BJ (cell line): ENCODE measurements at regions of chr7 and their contacts with region 1.

Region 1: GRCh38 chr7:55992346-55992745 is 28.0 kb downstream of the NIPSNAP2 start:
- DNase-seq: no peak
- H3K4me3 ChIP-seq: no peak overlapping the region
- H3K27me3 ChIP-seq: no peaks in the 10 kb centered on the region
- CTCF ChIP-seq: no peak

Region 2: GRCh38 chr7:55980266-55980665 is 12.1 kb before region 1 on chr7:
- CTCF ChIA-PET with region 1: interaction called, 5 read pairs
- POLR2A ChIA-PET with region 1: interaction called, 11 read pairs
- DNase-seq: no peak
- H3K4me3 ChIP-seq: no peak overlapping the region
- H3K27me3 ChIP-seq: no peaks in the 10 kb centered on the region
- CTCF ChIP-seq: no peak

Region 3: DNA sequence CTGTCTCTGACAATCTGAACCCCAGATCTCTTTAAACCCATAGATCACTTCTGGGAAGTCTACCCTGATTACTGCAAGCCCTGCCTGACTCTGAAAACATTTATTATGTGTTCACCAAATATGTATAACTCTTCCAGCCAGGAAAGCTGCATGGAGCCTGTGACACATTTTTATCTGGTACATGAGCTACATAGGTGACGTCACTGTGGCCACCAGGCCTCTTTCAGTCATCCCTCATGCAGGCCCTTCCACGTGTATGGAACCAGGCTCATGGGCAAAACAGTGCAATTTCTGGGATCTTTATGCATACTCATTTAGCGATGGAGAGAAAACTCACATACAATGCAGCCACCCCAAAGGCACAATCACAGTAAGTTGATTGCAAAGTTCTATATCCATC is 257.8 kb after region 1 on chr7:
- CTCF ChIA-PET with region 1: no interaction called
- POLR2A ChIA-PET with region 1: no interaction called
- DNase-seq: no peak
- H3K4me3 ChIP-seq: no peak overlapping the region
- H3K27me3 ChIP-seq: no peaks in the 10 kb centered on the region
- CTCF ChIP-seq: no peak